Activated CD4-positive, alpha-beta T cell treated with anti-CD3 and anti-CD28 coated beads for 36 hours (primary cell): ENCODE measurements at regions of chr16 and their contacts with region 1.

Region 1: GRCh38 chr16:2867987-2868789 is 10.2 kb upstream of the PRSS22 start:
- DNase-seq: peak; percentile 98
- ATAC-seq: peak; percentile 97
- H3K4me3 Mint-ChIP-seq: peak overlapping the region; percentile 81
- H3K27ac Mint-ChIP-seq: peak overlapping the region; percentile 85
- H3K4me1 Mint-ChIP-seq: peaks cover 7% of the 10 kb centered on the region
- H3K27me3 Mint-ChIP-seq: no peaks in the 10 kb centered on the region

Region 2: DNA sequence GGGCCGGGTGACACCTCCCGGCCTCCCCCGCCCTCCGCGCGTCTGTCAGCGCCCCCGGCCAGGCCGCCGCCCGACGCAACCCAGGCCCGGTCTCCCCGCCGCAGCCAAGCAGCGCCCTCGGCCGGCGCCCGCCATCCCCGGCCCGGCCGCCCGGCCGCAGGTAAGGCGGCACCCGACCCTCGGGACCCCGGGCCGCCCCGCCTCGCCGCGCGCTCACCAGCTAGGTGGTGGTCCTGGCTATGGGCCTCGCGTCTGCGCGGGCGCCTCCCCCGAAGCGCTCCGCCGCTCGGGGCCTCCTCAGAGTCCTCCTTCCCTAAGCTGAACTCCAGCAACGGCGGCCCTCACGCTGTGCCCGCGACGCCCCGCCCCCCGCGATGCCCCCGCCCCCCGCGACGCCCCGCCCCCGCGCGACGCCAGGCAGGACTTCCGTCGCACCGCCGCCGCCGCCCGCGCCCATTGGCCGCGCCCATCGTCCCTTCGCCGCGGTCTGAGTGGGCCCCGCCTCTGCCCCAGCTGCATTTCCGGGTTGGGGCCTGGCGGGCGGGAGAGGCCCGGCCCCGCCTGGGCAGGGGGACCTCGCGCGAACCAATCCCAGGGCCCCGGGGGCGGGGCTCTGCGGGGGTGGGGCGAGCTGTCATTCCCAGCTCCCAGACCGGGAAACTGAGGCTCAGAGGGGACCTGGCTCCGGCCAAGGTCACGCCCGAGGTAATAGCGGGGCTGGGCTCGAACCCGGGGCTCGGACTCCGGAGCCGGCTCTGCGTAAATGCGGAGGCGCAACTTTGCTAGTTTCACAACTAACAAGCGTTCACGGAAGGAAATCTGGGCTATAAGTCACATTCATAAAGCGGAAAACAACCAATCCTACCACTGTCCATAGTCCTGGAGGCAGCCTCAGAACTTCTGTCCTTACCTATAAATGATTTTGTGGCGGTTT is 194.9 kb before region 1 on chr16:
- CTCF ChIA-PET with region 1: no interaction called
- POLR2A ChIA-PET with region 1: no interaction called
- intact Hi-C with region 1: loop called in 1 of 2 experiments (anchors 1 kb)
- DNase-seq: peak; percentile 98
- ATAC-seq: peak; percentile 97
- H3K4me3 Mint-ChIP-seq: peak overlapping the region; percentile 73
- H3K27ac Mint-ChIP-seq: peak overlapping the region; percentile 47
- H3K4me1 Mint-ChIP-seq: peaks cover 28% of the 10 kb centered on the region
- H3K27me3 Mint-ChIP-seq: no peaks in the 10 kb centered on the region

Region 3: GRCh38 chr16:2692948-2693651 is 175.1 kb before region 1 on chr16:
- CTCF ChIA-PET with region 1: no interaction called
- POLR2A ChIA-PET with region 1: no interaction called
- intact Hi-C with region 1: no loop called
- DNase-seq: no peak
- ATAC-seq: no peak
- H3K4me3 Mint-ChIP-seq: no peak overlapping the region
- H3K27ac Mint-ChIP-seq: no peak overlapping the region
- H3K4me1 Mint-ChIP-seq: peaks cover 7% of the 10 kb centered on the region
- H3K27me3 Mint-ChIP-seq: no peaks in the 10 kb centered on the region

Region 4: DNA sequence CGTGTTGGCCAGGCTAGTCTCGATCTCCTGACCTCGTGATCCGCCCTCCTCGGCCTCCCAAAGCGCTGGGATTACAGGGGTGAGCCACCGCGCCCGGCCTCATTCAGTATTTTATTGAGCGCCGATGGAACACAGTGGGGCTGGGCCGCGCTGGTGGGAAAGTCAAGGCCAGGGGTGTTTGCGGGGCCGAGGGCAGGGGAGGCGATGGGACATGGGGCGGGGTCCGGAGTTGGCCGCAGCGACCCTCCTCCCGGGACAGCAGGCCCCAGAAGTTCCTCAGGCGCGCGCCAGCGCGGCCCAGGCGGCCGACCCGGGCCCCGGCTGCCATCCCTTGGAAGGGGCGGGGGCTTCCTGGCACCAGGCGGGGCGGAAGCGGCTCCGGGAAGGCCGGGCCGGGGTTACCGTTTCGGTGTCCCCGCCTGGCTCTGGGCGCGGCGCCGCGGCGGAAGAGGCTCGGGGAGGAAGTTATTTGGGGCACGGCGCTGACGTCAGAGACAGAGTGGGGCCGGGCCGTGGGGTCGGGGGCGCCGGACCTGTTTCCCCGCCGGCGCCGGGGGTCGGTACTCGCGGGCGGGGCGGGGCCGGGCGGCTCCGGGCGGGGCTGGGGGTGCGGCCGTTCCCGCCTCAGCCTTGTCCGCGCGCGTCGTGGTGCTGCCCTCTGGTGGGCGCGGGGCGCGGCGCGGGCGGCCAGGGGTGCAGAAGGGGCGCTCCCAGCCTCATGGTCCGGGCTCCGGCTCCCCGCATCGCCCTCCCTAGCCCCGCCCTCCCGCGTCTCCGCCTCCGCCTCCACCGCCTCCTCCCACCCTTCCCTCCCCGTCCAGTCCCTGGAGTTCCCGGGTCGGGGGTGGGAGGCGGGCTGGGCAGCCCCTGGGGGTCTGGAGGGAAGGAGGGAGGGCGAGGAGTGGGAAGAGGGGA is 147.2 kb before region 1 on chr16:
- CTCF ChIA-PET with region 1: no interaction called
- POLR2A ChIA-PET with region 1: no interaction called
- intact Hi-C with region 1: loop called in 1 of 2 experiments (anchors 1 kb)
- DNase-seq: peak; percentile 95
- ATAC-seq: peak; percentile 91
- H3K4me3 Mint-ChIP-seq: peak overlapping the region; percentile 77
- H3K27ac Mint-ChIP-seq: peak overlapping the region; percentile 83
- H3K4me1 Mint-ChIP-seq: no peaks in the 10 kb centered on the region
- H3K27me3 Mint-ChIP-seq: peaks cover 9% of the 10 kb centered on the region

Region 5: DNA sequence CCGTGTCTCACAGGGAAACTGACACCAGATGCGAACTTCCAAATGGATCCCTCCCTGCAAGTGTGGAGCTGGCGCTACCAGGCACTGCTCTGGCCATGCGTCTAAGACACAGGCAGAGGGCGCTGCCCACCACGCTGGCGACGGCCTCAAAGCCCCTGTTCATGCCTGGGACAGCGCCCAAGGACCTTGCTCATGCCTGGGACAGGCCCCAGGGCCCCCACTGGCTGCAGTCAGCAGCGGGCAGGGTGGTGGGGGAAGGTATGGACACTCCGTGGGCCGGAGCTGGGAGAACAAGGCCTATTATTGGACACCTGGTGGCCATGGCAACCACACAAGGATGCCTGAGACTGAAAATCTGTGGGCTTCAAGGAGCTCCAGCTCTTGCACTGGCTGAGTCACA is 29.3 kb before region 1 on chr16:
- CTCF ChIA-PET with region 1: interaction called, 33 read pairs
- POLR2A ChIA-PET with region 1: no interaction called
- intact Hi-C with region 1: loop called (anchors 1 to 2 kb)
- DNase-seq: peak; percentile 77
- ATAC-seq: peak; percentile 67
- H3K4me3 Mint-ChIP-seq: no peak overlapping the region
- H3K27ac Mint-ChIP-seq: no peak overlapping the region
- H3K4me1 Mint-ChIP-seq: peaks cover 31% of the 10 kb centered on the region
- H3K27me3 Mint-ChIP-seq: peaks cover 3% of the 10 kb centered on the region

Region 6: GRCh38 chr16:2854700-2855309 is 13.4 kb before region 1 on chr16:
- CTCF ChIA-PET with region 1: interaction called, 15 read pairs
- POLR2A ChIA-PET with region 1: no interaction called
- intact Hi-C with region 1: no loop called
- DNase-seq: peak; percentile 53
- ATAC-seq: no peak
- H3K4me3 Mint-ChIP-seq: no peak overlapping the region
- H3K27ac Mint-ChIP-seq: no peak overlapping the region
- H3K4me1 Mint-ChIP-seq: peaks cover 4% of the 10 kb centered on the region
- H3K27me3 Mint-ChIP-seq: peaks cover 3% of the 10 kb centered on the region

Region 7: DNA sequence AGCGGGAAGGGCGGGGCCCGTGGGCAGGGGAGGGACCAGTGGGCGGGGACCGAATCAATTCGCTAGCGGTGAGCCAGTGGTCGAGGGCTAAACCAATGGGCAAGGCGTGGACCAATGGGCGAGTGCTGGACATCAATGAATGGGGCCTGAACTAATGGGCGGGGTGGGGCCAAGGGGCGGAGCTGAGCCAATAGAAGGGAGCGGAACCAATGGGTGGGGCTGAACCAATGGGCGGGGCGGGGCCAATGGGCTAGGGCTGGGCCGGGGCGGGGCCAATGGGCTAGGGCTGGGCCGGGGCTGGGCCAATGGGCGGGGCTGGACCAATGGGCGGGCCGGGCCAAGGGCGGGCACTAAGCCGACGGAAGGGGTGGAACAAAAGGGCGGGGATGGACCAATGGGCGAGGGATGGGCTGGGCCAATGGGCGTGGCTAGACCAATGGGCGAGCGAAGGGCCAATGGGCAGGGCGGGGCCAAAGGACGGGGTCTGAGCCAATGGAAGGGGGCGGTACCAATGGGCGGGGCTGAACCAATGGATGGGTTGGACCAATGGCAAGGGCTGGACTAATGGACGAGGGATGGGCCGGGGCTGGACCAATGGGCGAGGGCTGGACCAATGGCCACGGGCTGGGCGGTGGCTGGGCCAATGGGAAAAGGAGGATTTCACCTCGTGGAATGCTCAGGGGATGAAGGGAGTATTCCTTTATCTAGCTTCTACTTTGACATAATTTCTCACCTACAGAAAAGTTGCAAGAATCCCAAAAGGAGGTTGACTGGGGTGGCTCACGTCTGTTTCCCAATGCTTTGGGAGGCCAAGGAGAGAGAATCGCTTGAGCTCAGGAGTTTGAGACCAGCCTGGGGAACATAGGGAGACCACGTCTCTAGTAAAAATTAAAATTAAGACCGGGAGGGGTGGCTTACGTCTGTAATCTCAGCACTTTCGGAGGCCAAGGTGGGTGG is 37.5 kb after region 1 on chr16:
- CTCF ChIA-PET with region 1: interaction called, 9 read pairs
- POLR2A ChIA-PET with region 1: no interaction called
- intact Hi-C with region 1: loop called in 1 of 2 experiments (anchors 1 kb)
- DNase-seq: peak; percentile 100
- ATAC-seq: peak; percentile 81
- H3K4me3 Mint-ChIP-seq: peak overlapping the region; percentile 94
- H3K27ac Mint-ChIP-seq: peak overlapping the region; percentile 8
- H3K4me1 Mint-ChIP-seq: peaks cover 19% of the 10 kb centered on the region
- H3K27me3 Mint-ChIP-seq: no peaks in the 10 kb centered on the region

Region 8: GRCh38 chr16:2926650-2927646 is 58.8 kb after region 1 on chr16:
- CTCF ChIA-PET with region 1: interaction called, 26 read pairs
- POLR2A ChIA-PET with region 1: interaction called, 3 read pairs
- intact Hi-C with region 1: no loop called
- DNase-seq: peak; percentile 93
- ATAC-seq: peak; percentile 99
- H3K4me3 Mint-ChIP-seq: no peak overlapping the region
- H3K27ac Mint-ChIP-seq: no peak overlapping the region
- H3K4me1 Mint-ChIP-seq: peaks cover 11% of the 10 kb centered on the region
- H3K27me3 Mint-ChIP-seq: no peaks in the 10 kb centered on the region